ENCODE measurements at regions of chr5 and their contacts with region 1.

Region 1: GRCh38 chr5:80204808-80205614 is 50.8 kb downstream of the SERINC5 start:
- DNase-seq: peak; percentile 87 to 92
- H3K4me3 ChIP-seq: no peak overlapping the region
- H3K4me3 Mint-ChIP-seq: peak overlapping the region; percentile 15
- H3K27ac Mint-ChIP-seq: peak overlapping the region; percentile 71
- H3K4me1 ChIP-seq: peaks cover 33% of the 10 kb centered on the region
- H3K4me1 Mint-ChIP-seq: peaks cover 42% of the 10 kb centered on the region
- H3K27me3 ChIP-seq: no peaks in the 10 kb centered on the region
- H3K27me3 Mint-ChIP-seq: no peaks in the 10 kb centered on the region
- CTCF ChIP-seq: peak; percentile 27 to 70

Region 2: DNA sequence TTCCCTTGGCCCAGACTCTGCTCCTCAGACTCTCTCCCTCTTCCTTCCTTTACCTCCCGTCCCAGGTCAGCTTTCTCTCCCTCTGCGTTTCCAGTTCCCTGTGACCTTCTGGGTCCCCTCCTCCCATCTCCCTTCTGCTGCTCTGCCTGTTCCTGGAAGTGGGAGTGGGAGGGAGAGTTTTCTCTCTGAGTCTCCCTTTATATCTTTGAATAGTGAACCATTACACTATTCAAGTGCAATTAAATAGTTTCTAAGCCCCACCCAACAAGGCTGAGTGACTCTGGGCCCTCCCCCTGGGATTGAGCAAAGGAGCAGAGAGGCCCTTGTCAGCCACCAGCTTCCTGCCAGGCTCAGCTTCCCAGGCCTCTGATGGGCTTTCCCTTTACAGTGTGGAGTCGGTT is 135.1 kb before region 1 on chr5:
- CTCF ChIA-PET with region 1: no interaction called
- POLR2A ChIA-PET with region 1: no interaction called
- intact Hi-C with region 1: no loop called
- DNase-seq: no peak
- H3K4me3 ChIP-seq: no peak overlapping the region
- H3K4me3 Mint-ChIP-seq: no peak overlapping the region
- H3K27ac Mint-ChIP-seq: no peak overlapping the region
- H3K4me1 ChIP-seq: no peaks in the 10 kb centered on the region
- H3K4me1 Mint-ChIP-seq: no peaks in the 10 kb centered on the region
- H3K27me3 ChIP-seq: no peaks in the 10 kb centered on the region
- H3K27me3 Mint-ChIP-seq: no peaks in the 10 kb centered on the region
- CTCF ChIP-seq: no peak

Region 3: DNA sequence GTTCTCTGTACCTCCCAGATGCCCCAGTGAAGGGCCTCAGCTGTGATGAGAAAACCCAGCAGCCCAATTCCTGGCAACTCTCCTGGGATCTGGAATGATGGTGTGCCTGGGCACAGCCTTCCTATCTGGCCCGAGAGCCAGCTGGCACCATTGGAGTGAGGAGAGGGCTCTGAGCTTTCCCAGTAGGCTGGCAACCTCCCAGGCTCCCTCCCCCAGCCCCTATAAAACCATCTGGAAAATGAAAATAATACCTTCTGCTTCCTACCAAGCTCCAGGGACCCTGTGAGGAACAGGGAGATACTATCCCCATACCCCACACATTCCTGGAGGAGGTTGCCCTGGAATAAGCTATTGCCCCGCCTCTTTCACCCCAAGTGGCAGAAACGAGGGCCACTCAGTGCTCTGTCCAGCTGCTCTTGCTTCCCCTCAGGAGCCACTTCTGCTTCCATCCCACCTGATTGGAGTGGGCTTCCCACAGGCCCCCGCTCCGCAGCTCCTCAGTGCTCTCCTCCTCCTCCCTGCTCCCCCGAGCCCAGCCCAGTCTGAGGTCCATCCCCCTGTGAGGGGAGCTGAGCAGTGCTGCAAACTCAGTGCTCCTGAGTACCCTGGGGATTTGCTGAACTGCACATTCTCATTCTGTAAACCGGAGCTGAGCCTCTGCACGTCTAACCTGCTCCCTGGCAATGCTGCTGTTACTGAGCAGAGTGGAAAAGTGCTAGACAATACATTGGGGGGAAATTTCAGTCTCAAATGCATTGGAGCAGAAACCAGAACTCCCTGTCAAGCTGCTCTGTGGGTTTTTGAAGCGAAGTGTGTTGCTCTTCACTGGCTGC is 95.1 kb before region 1 on chr5:
- CTCF ChIA-PET with region 1: interaction called, 6 read pairs
- POLR2A ChIA-PET with region 1: interaction called, 3 read pairs
- intact Hi-C with region 1: loop called (anchors 1 kb)
- DNase-seq: no peak
- H3K4me3 ChIP-seq: no peak overlapping the region
- H3K4me3 Mint-ChIP-seq: peak overlapping the region; percentile 12
- H3K27ac Mint-ChIP-seq: peak overlapping the region; percentile 91
- H3K4me1 ChIP-seq: peaks cover 52% of the 10 kb centered on the region
- H3K4me1 Mint-ChIP-seq: peaks cover 83% of the 10 kb centered on the region
- H3K27me3 ChIP-seq: no peaks in the 10 kb centered on the region
- H3K27me3 Mint-ChIP-seq: no peaks in the 10 kb centered on the region
- CTCF ChIP-seq: no peak

Region 4: GRCh38 chr5:80165452-80165851 is 39.6 kb before region 1 on chr5:
- CTCF ChIA-PET with region 1: interaction called, 10 read pairs
- POLR2A ChIA-PET with region 1: interaction called, 8 read pairs
- intact Hi-C with region 1: loop called (anchors 1 kb)
- DNase-seq: peak; percentile 60 to 64
- H3K4me3 ChIP-seq: no peak overlapping the region
- H3K4me3 Mint-ChIP-seq: peak overlapping the region; percentile 27
- H3K27ac Mint-ChIP-seq: peak overlapping the region; percentile 70
- H3K4me1 ChIP-seq: peaks cover 47% of the 10 kb centered on the region
- H3K4me1 Mint-ChIP-seq: peaks cover 66% of the 10 kb centered on the region
- H3K27me3 ChIP-seq: no peaks in the 10 kb centered on the region
- H3K27me3 Mint-ChIP-seq: no peaks in the 10 kb centered on the region
- CTCF ChIP-seq: no peak

Region 5: GRCh38 chr5:80191991-80192398 is 13.0 kb before region 1 on chr5:
- CTCF ChIA-PET with region 1: interaction called, 11 read pairs
- POLR2A ChIA-PET with region 1: interaction called, 6 read pairs
- intact Hi-C with region 1: loop called (anchors 1 kb)
- DNase-seq: no peak
- H3K4me3 ChIP-seq: no peak overlapping the region
- H3K4me3 Mint-ChIP-seq: no peak overlapping the region
- H3K27ac Mint-ChIP-seq: peak overlapping the region; percentile 71
- H3K4me1 ChIP-seq: peaks cover 74% of the 10 kb centered on the region
- H3K4me1 Mint-ChIP-seq: peaks cover 54% of the 10 kb centered on the region
- H3K27me3 ChIP-seq: no peaks in the 10 kb centered on the region
- H3K27me3 Mint-ChIP-seq: no peaks in the 10 kb centered on the region
- CTCF ChIP-seq: no peak

Region 6: GRCh38 chr5:80275347-80275746 is 70.3 kb after region 1 on chr5:
- CTCF ChIA-PET with region 1: no interaction called
- POLR2A ChIA-PET with region 1: no interaction called
- intact Hi-C with region 1: loop called (anchors 2 kb)
- DNase-seq: peak in 1 of 2 experiments; percentile 43
- H3K4me3 ChIP-seq: no peak overlapping the region
- H3K4me3 Mint-ChIP-seq: no peak overlapping the region
- H3K27ac Mint-ChIP-seq: no peak overlapping the region
- H3K4me1 ChIP-seq: no peaks in the 10 kb centered on the region
- H3K4me1 Mint-ChIP-seq: peaks cover 7% of the 10 kb centered on the region
- H3K27me3 ChIP-seq: no peaks in the 10 kb centered on the region
- H3K27me3 Mint-ChIP-seq: no peaks in the 10 kb centered on the region
- CTCF ChIP-seq: peak; percentile 53 to 62